ENCODE measurements at regions of chr11 and their contacts with region 1.

Region 1: GRCh38 chr11:65919146-65920033 is at the start of gene DRAP1:
- DNase-seq: peak; percentile 97 to 100 (median 99)
- ATAC-seq: peak; percentile 88
- H3K4me3 ChIP-seq: peak within 1 kb of the TSS; percentile 100
- H3K4me3 Mint-ChIP-seq: peak within 1 kb of the TSS; percentile 94
- H3K27ac ChIP-seq: peak within 1 kb of the TSS; percentile 83 to 86
- H3K27ac Mint-ChIP-seq: peak within 1 kb of the TSS; percentile 92
- H3K4me1 ChIP-seq: peaks cover 54% of the 10 kb centered on the region
- H3K4me1 Mint-ChIP-seq: peaks cover 47% of the 10 kb centered on the region
- H3K27me3 ChIP-seq: no peaks in the 10 kb centered on the region
- H3K27me3 Mint-ChIP-seq: no peaks in the 10 kb centered on the region
- CTCF ChIP-seq: no peak
- total RNA-seq, gene DRAP1: 58.6 to 59.1 TPM

Region 2: GRCh38 chr11:65873318-65874156 is 45.9 kb before region 1 on chr11:
- CTCF ChIA-PET with region 1: no interaction called
- POLR2A ChIA-PET with region 1: interaction called, 3 read pairs
- intact Hi-C with region 1: loop called in 1 of 2 experiments (anchors 1 kb)
- DNase-seq: peak; percentile 92 to 99 (median 96)
- ATAC-seq: peak; percentile 95
- H3K4me3 ChIP-seq: peak overlapping the region; percentile 60
- H3K4me3 Mint-ChIP-seq: peak overlapping the region; percentile 89
- H3K27ac ChIP-seq: peak overlapping the region; percentile 78 to 81
- H3K27ac Mint-ChIP-seq: peak overlapping the region; percentile 83
- H3K4me1 ChIP-seq: peaks cover 51% of the 10 kb centered on the region
- H3K4me1 Mint-ChIP-seq: peaks cover 16% of the 10 kb centered on the region
- H3K27me3 ChIP-seq: no peaks in the 10 kb centered on the region
- H3K27me3 Mint-ChIP-seq: no peaks in the 10 kb centered on the region
- CTCF ChIP-seq: no peak

Region 3: DNA sequence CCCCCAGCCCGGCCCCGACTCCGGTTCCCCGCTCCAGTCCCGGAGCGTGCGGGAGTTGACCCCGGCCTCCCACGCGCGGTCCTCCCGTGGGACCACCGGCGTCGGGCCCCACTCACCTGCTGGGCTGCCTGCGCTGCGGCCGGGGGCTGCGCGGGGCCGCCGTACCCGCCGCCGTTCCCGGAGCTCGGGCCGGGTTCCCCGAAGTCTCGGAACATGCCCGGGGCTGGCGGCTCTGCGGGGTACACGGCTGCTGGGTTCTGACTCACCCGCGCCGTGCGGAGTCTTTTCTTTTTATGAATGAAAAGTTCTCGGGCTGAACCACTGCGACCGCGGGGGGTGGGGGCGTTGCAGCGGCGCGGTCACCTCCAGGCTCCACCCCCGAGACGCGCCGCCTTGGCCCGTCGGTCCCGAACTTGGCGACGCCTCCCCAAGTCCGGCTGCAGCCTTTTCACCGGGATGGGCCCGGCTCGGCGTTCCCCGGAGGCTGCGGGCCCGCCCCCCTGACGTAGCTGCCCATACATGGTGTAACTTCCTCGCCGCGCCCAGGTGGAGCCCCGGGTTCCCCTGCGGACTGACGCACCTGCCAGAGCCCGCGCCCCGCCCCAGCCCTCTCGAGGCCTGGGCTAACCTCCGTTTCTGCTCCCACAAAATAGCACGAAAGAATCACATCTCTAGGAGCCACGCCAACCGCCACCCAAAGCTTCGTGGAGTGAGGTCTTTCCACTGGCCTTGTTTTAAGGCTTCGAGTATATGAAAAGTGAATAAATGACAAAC is 19.1 kb before region 1 on chr11 and contains the start of gene FOSL1:
- CTCF ChIA-PET with region 1: no interaction called
- POLR2A ChIA-PET with region 1: interaction called, 12 read pairs
- intact Hi-C with region 1: loop called (anchors 1 kb)
- DNase-seq: peak; percentile 81 to 98 (median 90)
- ATAC-seq: peak; percentile 94
- H3K4me3 ChIP-seq: peak within 1 kb of the TSS; percentile 43
- H3K4me3 Mint-ChIP-seq: peak within 1 kb of the TSS; percentile 72
- H3K27ac ChIP-seq: no peak within 1 kb of the TSS
- H3K27ac Mint-ChIP-seq: peak within 1 kb of the TSS; percentile 79
- H3K4me1 ChIP-seq: peaks cover 27% of the 10 kb centered on the region
- H3K4me1 Mint-ChIP-seq: peaks cover 5% of the 10 kb centered on the region
- H3K27me3 ChIP-seq: peaks cover 9 to 12% of the 10 kb centered on the region in 2 experiments
- H3K27me3 Mint-ChIP-seq: peaks cover 18% of the 10 kb centered on the region
- CTCF ChIP-seq: no peak
- total RNA-seq, gene FOSL1: 1.8 to 2.2 TPM

Region 4: DNA sequence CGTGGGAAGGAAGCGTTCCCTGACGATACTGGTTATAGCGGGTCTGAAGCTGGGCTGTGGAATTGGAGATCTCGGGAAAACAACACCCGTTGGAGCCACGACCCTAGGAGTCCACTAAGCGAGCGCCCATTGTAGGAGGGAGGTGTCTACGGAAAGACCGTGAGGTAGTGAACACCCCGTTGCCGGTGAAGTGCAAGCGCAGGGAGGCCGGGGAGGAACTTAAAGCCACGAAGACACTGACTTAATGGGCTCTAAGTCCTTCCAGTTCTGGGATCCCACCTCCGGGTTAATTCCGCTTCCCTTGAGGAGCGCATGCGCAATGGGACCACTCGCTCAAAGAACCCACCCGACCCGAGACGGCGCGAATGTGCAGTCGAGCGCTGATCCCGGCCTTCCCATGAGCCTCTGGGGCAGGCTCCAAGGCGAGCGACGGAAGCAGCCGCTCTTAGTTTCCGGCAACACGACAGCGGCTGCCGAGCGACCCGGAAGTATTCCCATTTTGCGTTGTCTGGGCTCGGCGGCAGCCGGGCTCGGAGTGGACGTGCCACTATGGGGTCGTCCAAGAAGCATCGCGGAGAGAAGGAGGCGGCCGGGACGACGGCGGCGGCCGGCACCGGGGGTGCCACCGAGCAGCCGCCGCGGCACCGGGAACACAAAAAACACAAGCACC is 42.0 kb after region 1 on chr11 and contains the start of gene SART1:
- CTCF ChIA-PET with region 1: no interaction called
- POLR2A ChIA-PET with region 1: interaction called, 25 read pairs
- intact Hi-C with region 1: loop called (anchors 1 to 2 kb)
- DNase-seq: peak; percentile 89 to 99 (median 94)
- ATAC-seq: peak; percentile 90
- H3K4me3 ChIP-seq: peak within 1 kb of the TSS; percentile 92
- H3K4me3 Mint-ChIP-seq: peak within 1 kb of the TSS; percentile 99
- H3K27ac ChIP-seq: peak within 1 kb of the TSS; percentile 93 to 95
- H3K27ac Mint-ChIP-seq: peak within 1 kb of the TSS; percentile 96
- H3K4me1 ChIP-seq: peaks cover 54% of the 10 kb centered on the region
- H3K4me1 Mint-ChIP-seq: peaks cover 55% of the 10 kb centered on the region
- H3K27me3 ChIP-seq: no peaks in the 10 kb centered on the region
- H3K27me3 Mint-ChIP-seq: no peaks in the 10 kb centered on the region
- CTCF ChIP-seq: no peak
- total RNA-seq, gene SART1: 78.6 to 80.2 TPM

Region 5: DNA sequence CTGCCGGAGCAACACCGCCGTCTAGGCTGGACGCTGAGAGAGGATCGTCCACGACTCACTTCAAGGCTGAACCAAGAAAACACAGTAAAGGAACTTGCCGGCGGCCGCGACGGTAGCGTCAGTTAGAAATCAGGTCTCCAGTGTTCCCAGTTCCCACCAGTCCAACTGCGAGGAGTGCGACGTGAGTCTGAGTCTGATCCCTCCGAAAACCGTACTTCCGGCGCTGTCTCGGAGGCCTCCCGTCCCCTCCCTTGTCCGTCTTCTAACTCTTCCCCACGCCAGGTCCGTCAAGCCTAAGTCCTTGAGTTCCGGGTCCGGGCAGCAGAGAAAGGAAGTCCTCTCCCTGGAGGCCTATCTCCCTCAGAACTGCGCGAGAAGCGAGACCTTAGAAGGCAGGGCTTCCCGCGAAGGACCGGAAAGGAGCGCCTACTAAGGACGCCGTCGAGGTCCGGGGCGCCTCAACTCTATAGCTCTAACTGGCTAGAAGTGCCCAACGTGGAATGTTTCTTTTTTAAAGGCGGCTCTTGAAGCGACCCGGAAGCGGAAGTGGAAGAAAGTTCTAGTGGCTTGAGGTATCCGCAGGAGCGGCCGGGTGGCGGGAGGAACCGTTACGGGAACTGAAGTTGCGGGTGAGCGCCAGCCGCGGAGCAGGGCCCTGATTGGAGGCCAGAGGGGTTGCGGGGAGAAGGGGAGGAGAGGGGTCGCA is 82.7 kb after region 1 on chr11 and contains the starts of genes BANF1 and EIF1AD:
- CTCF ChIA-PET with region 1: no interaction called
- POLR2A ChIA-PET with region 1: interaction called, 3 read pairs
- intact Hi-C with region 1: loop called in 1 of 2 experiments (anchors 1 kb)
- DNase-seq: peak; percentile 84 to 98 (median 89)
- ATAC-seq: peak; percentile 77
- H3K4me3 ChIP-seq: peak within 1 kb of the TSS; percentile 75
- H3K4me3 Mint-ChIP-seq: peak within 1 kb of the TSS; percentile 94
- H3K27ac ChIP-seq: peak within 1 kb of the TSS; percentile 86 to 96
- H3K27ac Mint-ChIP-seq: peak within 1 kb of the TSS; percentile 97
- H3K4me1 ChIP-seq: peaks cover 39% of the 10 kb centered on the region
- H3K4me1 Mint-ChIP-seq: peaks cover 54% of the 10 kb centered on the region
- H3K27me3 ChIP-seq: no peaks in the 10 kb centered on the region
- H3K27me3 Mint-ChIP-seq: no peaks in the 10 kb centered on the region
- CTCF ChIP-seq: no peak
- total RNA-seq, gene BANF1: 21.3 to 22.3 TPM
- total RNA-seq, gene EIF1AD: 88.2 to 94.1 TPM

Region 6: DNA sequence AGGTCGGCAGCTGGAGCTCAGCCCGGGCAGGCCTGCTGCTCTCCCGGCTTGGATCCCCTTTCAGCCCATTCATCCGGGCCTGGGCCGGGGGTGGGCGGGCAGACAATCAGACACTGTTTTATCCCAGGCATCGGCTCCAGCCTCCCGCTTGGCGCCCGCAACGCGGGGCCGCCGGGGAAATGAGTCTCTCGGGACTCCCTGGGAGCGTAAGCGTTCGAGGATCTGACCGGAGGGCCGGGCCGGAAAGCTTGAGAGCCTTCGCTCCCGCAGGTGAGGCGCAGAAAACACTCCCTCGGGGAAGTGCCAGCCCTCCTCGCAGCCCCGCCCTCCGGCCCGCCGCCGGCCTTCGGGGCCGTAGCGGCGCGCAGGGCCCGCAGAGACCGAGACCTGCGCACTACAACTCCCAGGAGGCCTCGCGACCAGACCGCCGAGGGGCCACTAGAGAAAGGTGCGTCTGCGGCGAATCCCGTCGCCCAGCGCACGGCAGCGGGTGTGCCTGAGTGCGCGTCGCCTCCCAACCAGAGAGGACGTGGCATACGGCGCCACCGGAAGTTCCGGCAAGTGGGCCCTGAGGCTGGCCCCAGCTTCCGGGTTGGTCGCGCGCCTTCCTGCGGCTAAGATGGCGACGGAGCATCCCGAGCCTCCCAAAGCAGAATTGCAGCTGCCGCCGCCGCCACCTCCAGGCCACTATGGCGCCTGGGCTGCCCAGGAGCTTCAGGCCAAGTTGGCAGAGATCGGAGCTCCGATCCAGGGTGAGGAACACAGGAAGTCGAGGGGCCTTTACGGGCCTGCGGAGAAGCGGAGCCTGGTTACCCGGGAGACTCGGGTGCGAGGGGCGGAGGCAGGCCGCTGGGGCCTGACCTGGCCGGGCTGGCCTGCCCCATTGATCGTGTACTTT is 132.6 kb after region 1 on chr11 and contains the start of gene SF3B2:
- CTCF ChIA-PET with region 1: no interaction called
- POLR2A ChIA-PET with region 1: no interaction called
- intact Hi-C with region 1: loop called in 1 of 2 experiments (anchors 5 kb)
- DNase-seq: peak; percentile 88 to 99 (median 94)
- ATAC-seq: peak; percentile 95
- H3K4me3 ChIP-seq: peak within 1 kb of the TSS; percentile 100
- H3K4me3 Mint-ChIP-seq: peak within 1 kb of the TSS; percentile 100
- H3K27ac ChIP-seq: peak within 1 kb of the TSS; percentile 66 to 90
- H3K27ac Mint-ChIP-seq: peak within 1 kb of the TSS; percentile 97
- H3K4me1 ChIP-seq: peaks cover 43% of the 10 kb centered on the region
- H3K4me1 Mint-ChIP-seq: peaks cover 37% of the 10 kb centered on the region
- H3K27me3 ChIP-seq: no peaks in the 10 kb centered on the region
- H3K27me3 Mint-ChIP-seq: peaks cover 5% of the 10 kb centered on the region
- CTCF ChIP-seq: no peak
- total RNA-seq, gene SF3B2: 182 to 196 TPM

Region 7: GRCh38 chr11:66548041-66548440 is 628.7 kb after region 1 on chr11:
- CTCF ChIA-PET with region 1: no interaction called
- POLR2A ChIA-PET with region 1: no interaction called
- intact Hi-C with region 1: no loop called
- DNase-seq: no peak
- ATAC-seq: no peak
- H3K4me3 ChIP-seq: no peak overlapping the region
- H3K4me3 Mint-ChIP-seq: peak overlapping the region; percentile 74
- H3K27ac ChIP-seq: no peak overlapping the region
- H3K27ac Mint-ChIP-seq: no peak overlapping the region
- H3K4me1 ChIP-seq: peaks cover 38% of the 10 kb centered on the region
- H3K4me1 Mint-ChIP-seq: peaks cover 21% of the 10 kb centered on the region
- H3K27me3 ChIP-seq: no peaks in the 10 kb centered on the region
- H3K27me3 Mint-ChIP-seq: no peaks in the 10 kb centered on the region
- CTCF ChIP-seq: no peak